ENCODE measurements at regions of chr6 and their contacts with region 1.

Region 1: GRCh38 chr6:5143634-5144311 is 58.6 kb downstream of the PPP1R3G start:
- DNase-seq: peak; percentile 91 to 92
- H3K4me3 ChIP-seq: no peak overlapping the region
- H3K27ac ChIP-seq: no peak overlapping the region
- H3K4me1 ChIP-seq: peaks cover 11 to 25% of the 10 kb centered on the region in 2 donors
- H3K27me3 ChIP-seq: no peaks in the 10 kb centered on the region
- CTCF ChIP-seq: peak; percentile 80 to 92 (median 90)
- POLR2A ChIP-seq: no peak

Region 2: DNA sequence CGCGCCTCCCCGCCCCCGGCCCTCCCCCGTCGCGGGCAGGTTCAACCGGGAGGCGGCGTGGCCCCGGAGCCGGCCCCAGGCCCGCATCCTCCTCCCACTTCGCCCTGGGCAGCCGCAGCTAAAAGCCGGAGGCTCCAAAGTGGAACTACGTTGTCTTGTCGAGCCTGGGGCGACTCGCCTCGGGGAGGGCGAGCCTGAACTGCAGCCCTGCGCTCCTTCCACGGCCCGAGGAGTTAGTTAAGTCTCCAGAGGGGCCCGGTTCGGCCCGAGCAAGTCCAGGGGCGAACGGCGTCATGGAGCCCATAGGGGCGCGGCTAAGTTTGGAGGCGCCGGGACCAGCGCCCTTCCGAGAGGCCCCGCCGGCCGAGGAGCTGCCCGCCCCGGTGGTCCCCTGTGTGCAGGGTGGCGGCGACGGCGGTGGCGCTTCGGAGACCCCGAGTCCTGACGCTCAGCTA is 58.6 kb before region 1 on chr6 and contains the start of gene PPP1R3G:
- intact Hi-C with region 1: no loop called
- DNase-seq: peak; percentile 33 to 41
- H3K4me3 ChIP-seq: peak within 1 kb of the TSS; percentile 42 to 64 (median 58)
- H3K27ac ChIP-seq: peak within 1 kb of the TSS in 2 of 3 donors; percentile 42 to 65
- H3K4me1 ChIP-seq: peaks cover 8 to 14% of the 10 kb centered on the region in 2 donors
- H3K27me3 ChIP-seq: no peaks in the 10 kb centered on the region
- CTCF ChIP-seq: peak in 1 of 6 experiments; percentile 4
- POLR2A ChIP-seq: no peak
- total RNA-seq, gene PPP1R3G: 0.78 to 1.6 (median 0.91) TPM

Region 3: GRCh38 chr6:5214570-5215052 is 70.8 kb after region 1 on chr6:
- intact Hi-C with region 1: loop called (anchors 10 kb)
- DNase-seq: peak; percentile 78
- H3K4me3 ChIP-seq: no peak overlapping the region
- H3K27ac ChIP-seq: peak overlapping the region; percentile 31 to 67 (median 43)
- H3K4me1 ChIP-seq: peaks cover 30 to 48% of the 10 kb centered on the region in 2 donors
- H3K27me3 ChIP-seq: no peaks in the 10 kb centered on the region
- CTCF ChIP-seq: peak; percentile 32 to 96 (median 84)
- POLR2A ChIP-seq: no peak

Region 4: GRCh38 chr6:5302995-5303622 is 159.3 kb after region 1 on chr6:
- intact Hi-C with region 1: loop called (anchors 5 kb)
- DNase-seq: peak; percentile 87
- H3K4me3 ChIP-seq: no peak overlapping the region
- H3K27ac ChIP-seq: peak overlapping the region; percentile 34 to 62 (median 54)
- H3K4me1 ChIP-seq: peaks cover 14 to 19% of the 10 kb centered on the region in 2 donors
- H3K27me3 ChIP-seq: no peaks in the 10 kb centered on the region
- CTCF ChIP-seq: peak; percentile 27 to 85 (median 77)
- POLR2A ChIP-seq: no peak

Region 5: DNA sequence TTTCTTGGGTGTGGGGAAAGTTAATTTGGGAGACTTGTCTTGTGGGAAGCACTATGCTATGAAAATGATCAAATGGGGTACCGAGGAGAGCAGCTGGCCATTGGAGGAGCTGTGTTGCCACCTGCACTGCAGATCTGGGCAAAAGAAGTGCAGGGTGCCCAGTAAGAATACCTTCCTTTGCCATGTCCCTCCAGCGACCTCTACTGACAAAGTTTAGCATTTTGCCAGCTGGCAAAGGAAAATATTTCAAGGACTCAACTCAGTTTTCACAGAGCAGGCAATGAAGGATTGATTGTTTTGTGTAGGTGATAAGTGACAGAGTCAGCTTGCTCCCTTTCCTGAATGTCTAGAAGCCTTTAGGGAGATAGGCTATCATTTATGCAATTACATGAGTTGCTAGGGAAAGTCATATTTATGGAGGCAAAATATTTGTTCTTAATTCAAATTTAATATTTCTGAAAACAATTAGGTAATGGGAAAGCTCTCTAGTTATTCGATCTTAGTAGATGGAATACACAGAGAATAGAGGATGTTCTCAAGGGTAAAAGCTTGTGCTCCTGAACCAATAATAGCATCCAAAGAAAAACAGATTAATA is 236.0 kb after region 1 on chr6:
- intact Hi-C with region 1: loop called (anchors 10 kb)
- DNase-seq: no peak
- H3K4me3 ChIP-seq: no peak overlapping the region
- H3K27ac ChIP-seq: no peak overlapping the region
- H3K4me1 ChIP-seq: peaks cover 0 to 4% of the 10 kb centered on the region in 2 donors
- H3K27me3 ChIP-seq: no peaks in the 10 kb centered on the region
- CTCF ChIP-seq: peak in 1 of 6 experiments; percentile 19
- POLR2A ChIP-seq: no peak

Region 6: GRCh38 chr6:6547110-6547879 is 1403.5 kb after region 1 on chr6:
- intact Hi-C with region 1: loop called (anchors 10 kb)
- DNase-seq: peak; percentile 84 to 88
- H3K4me3 ChIP-seq: peak overlapping the region in 1 of 3 donors; percentile 25
- H3K27ac ChIP-seq: no peak overlapping the region
- H3K4me1 ChIP-seq: peaks cover 9 to 12% of the 10 kb centered on the region in 2 donors
- H3K27me3 ChIP-seq: peaks cover 8% of the 10 kb centered on the region
- CTCF ChIP-seq: peak; percentile 86 to 94 (median 90)
- POLR2A ChIP-seq: no peak

Measured in thyroid gland (tissue), 4 donors.